ENCODE measurements at regions of chr4 and their contacts with region 1.

Region 1: GRCh38 chr4:3091464-3091863 is 17.0 kb downstream of the HTT start:
- DNase-seq: no peak

Region 2: DNA sequence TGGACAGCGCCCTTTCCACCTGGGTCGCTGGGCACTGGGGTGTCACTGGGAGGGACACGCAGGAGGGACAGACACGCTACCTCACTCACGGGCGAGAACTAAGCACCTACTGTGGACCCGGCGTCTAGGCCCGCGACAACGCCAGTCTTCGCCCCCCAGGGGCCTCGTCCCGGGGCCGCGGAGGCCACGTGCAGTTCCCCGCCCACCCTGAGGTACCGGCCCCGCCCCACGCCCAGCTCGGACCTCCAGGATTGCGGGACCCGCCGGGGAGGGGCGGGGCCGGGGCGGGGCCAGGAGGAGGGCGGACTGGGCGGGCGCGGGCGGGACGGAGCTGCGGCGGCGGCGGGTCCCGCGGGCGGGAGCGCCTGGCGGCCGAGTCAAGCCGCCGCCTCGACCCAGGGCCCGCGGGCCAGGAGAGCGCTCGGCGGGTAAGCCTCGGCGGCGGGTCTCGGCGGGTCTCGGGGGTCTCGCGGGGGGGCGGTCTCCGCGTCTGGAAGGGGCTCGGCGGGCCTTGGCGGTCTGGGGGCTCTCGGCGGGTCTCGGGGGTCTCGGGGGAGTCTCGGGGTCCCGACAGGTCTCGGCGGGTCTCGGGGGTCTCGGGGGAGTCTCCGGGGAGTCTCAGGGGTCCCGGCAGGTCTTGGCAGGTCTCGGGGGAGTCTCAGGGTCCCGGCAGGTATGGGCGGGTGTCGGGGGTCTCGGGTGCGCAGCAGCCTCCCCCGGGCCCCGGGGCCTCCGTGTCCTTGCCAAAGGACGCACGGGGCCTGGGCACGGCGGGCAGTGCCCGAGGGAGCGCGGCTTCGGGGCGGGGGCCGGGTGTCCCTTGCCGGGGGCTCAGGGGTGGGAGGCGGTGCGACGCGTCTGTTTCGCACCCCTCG is 298.5 kb before region 1 on chr4 and contains the start of gene SH3BP2:
- intact Hi-C with region 1: no loop called
- DNase-seq: peak; percentile 93
- total RNA-seq, gene SH3BP2: 47.8 to 52.4 TPM

Region 3: GRCh38 chr4:3059943-3060342 is 31.5 kb before region 1 on chr4:
- intact Hi-C with region 1: loop called in 1 of 2 experiments (anchors 2 kb)
- DNase-seq: no peak

Region 4: GRCh38 chr4:3067473-3068001 is 23.9 kb before region 1 on chr4:
- intact Hi-C with region 1: loop called in 1 of 2 experiments (anchors 1 kb)
- DNase-seq: no peak